Dendritic cell treated with granulocyte-macrophage colony-stimulating factor and Interleukin-4, amounts not matched to agents 40 ng/mL and 50 ng/mL, for 4 days (primary cell): ENCODE measurements at regions of chrX and their contacts with region 1.

Region 1: GRCh38 chrX:18377796-18378195 is 23.3 kb upstream of the SCML2 start:
- H3K4me3 Mint-ChIP-seq: no peak overlapping the region
- H3K27ac Mint-ChIP-seq: no peak overlapping the region
- H3K4me1 Mint-ChIP-seq: no peaks in the 10 kb centered on the region
- H3K27me3 Mint-ChIP-seq: peaks cover 4% of the 10 kb centered on the region

Region 2: DNA sequence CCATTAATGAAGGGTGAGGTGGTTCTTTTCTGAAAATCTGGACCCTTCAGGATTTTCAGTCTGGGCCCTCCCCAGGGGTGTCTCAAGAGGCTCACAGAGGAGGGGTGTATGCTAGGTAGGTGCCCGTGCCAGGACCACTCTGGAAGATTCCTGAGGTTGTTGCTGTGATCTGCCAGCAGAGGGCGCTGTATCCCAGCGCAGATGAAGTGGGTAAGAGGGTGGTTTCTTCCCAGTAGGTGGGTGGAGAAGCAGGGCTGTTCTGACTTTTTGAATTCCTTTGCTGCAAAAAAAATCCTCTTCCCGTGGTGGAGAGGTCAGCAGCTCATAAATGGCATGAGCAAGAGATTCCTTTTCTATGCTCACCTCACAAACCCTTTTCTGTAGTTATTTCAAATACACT is 589.4 kb before region 1 on chrX:
- intact Hi-C with region 1: loop called (anchors 2 kb)
- H3K4me3 Mint-ChIP-seq: no peak overlapping the region
- H3K27ac Mint-ChIP-seq: no peak overlapping the region
- H3K4me1 Mint-ChIP-seq: no peaks in the 10 kb centered on the region
- H3K27me3 Mint-ChIP-seq: peaks cover 9% of the 10 kb centered on the region

Region 3: GRCh38 chrX:17944833-17945497 is 432.8 kb before region 1 on chrX:
- intact Hi-C with region 1: loop called (anchors 5 kb)
- H3K4me3 Mint-ChIP-seq: no peak overlapping the region
- H3K27ac Mint-ChIP-seq: no peak overlapping the region
- H3K4me1 Mint-ChIP-seq: no peaks in the 10 kb centered on the region
- H3K27me3 Mint-ChIP-seq: no peaks in the 10 kb centered on the region